ENCODE measurements at regions of chr15 and their contacts with region 1.

Region 1: GRCh38 chr15:73639464-73640188 is 6.4 kb upstream of the NPTN start:
- DNase-seq: no peak
- H3K4me3 ChIP-seq: no peak overlapping the region
- CTCF ChIP-seq: no peak
- POLR2A ChIP-seq: no peak

Region 2: GRCh38 chr15:73426323-73426994 is 213.2 kb before region 1 on chr15:
- intact Hi-C with region 1: no loop called
- DNase-seq: no peak
- H3K4me3 ChIP-seq: no peak overlapping the region
- CTCF ChIP-seq: no peak
- POLR2A ChIP-seq: no peak

Region 3: DNA sequence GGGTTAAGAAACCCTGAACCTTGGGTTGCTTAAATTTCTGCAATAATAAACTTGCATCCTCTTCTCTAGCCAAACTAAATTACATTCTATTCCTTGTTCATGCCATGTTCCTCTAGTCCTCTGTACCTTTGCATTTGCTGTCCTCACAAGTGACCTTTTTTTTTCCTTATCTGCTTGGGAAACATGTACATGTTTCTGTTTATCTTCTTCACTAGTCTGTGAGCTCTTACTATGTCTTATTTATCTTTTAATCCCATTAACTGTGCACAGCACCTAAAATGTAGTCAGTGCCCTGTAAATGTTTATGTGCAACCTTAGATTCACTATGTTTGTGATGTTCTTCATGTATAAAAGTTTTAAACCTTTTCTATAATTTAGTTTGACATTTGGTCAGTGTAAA is 134.7 kb before region 1 on chr15:
- intact Hi-C with region 1: no loop called
- DNase-seq: no peak
- H3K4me3 ChIP-seq: no peak overlapping the region
- CTCF ChIP-seq: no peak
- POLR2A ChIP-seq: no peak

Region 4: DNA sequence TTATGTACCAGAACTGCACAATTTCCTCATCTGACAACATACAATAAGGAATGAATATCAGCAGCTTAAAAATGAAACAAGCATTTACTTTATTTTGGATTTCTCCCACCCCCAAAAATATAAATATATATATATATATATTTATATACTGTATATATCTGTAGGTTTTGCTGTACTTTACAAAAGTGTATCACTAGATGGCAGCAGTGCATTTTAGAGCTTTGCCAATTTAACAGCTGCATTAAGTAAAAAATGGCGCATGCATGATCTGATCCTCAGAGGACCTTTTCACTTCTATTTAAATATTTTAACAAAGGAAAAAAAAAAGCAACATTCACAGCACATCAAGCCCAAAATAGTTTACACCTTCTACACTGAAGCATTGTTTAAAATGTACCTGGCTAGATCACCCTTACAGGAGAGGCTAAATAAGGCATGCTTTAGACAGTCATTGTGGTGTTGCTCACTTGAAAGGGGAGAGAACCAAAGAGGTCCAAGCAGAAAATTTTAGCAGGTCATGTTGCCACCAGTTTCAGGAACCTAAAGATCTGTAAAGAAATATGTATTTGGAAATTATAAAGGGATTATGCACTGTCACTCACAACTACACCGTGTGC is 79.0 kb before region 1 on chr15:
- intact Hi-C with region 1: loop called (anchors 5 kb)
- DNase-seq: no peak
- H3K4me3 ChIP-seq: no peak overlapping the region
- CTCF ChIP-seq: no peak
- POLR2A ChIP-seq: no peak

Measured in lower leg skin (tissue), 4 donors.